Motor neuron (in vitro differentiated cells): ENCODE measurements at regions of chr3 and their contacts with region 1.

Region 1: GRCh38 chr3:107064445-107065060 is 312.7 kb upstream of the CCDC54 start:
- ATAC-seq: peak; percentile 65 to 90 (median 80)
- H3K4me3 ChIP-seq: no peak overlapping the region
- H3K27ac ChIP-seq: no peak overlapping the region
- H3K4me1 ChIP-seq: peaks cover 0 to 2% of the 10 kb centered on the region in 2 donors

Region 2: DNA sequence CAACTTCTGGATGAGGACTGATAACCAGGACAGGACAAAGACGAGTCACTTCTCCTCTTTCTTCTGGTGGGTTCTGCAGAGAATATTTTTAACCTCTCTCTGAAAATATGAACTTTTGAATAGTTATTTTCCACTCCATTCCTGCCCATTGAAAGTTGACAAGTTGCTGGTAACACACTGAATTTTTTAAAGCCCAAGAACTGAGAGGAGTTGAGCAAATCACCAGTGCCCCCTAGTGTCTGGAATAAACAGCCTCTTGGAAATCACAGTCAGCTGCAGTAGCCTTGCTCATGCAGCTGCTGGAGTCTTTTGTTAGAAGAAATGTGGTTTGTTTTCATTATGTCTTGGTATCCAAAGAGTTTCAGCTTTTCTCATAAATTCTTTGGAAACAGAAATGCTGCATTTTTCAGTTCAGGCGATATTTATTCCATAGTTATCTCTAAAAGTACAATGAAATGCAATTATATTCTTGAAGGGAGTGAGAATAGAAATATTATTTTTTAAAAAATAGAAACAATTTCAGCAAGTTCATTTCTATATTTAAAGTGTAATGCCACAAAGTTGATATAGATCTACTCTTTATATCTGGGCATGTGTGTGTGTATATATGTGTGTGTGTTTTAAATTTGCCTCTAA is 454.8 kb before region 1 on chr3:
- in situ Hi-C with region 1: loop called in 2 of 9 experiments (anchors 25 kb)
- ATAC-seq: peak; percentile 64 to 92 (median 81)
- H3K4me3 ChIP-seq: no peak overlapping the region
- H3K27ac ChIP-seq: no peak overlapping the region
- H3K4me1 ChIP-seq: peaks cover 0 to 2% of the 10 kb centered on the region in 2 donors

Region 3: GRCh38 chr3:106635271-106635670 is 429.3 kb before region 1 on chr3:
- in situ Hi-C with region 1: loop called in 1 of 9 experiments (anchors 25 kb)
- ATAC-seq: peak in 6 of 8 experiments; percentile 36 to 51 (median 44)
- H3K4me3 ChIP-seq: no peak overlapping the region
- H3K27ac ChIP-seq: no peak overlapping the region
- H3K4me1 ChIP-seq: peaks cover 0 to 2% of the 10 kb centered on the region in 2 donors

Region 4: GRCh38 chr3:106824856-106825255 is 239.7 kb before region 1 on chr3:
- in situ Hi-C with region 1: loop called in 3 of 9 experiments (anchors 25 kb)
- ATAC-seq: peak in 4 of 8 experiments; percentile 6 to 80 (median 68)
- H3K4me3 ChIP-seq: no peak overlapping the region
- H3K27ac ChIP-seq: no peak overlapping the region
- H3K4me1 ChIP-seq: peaks cover 7 to 15% of the 10 kb centered on the region in 2 donors

Region 5: DNA sequence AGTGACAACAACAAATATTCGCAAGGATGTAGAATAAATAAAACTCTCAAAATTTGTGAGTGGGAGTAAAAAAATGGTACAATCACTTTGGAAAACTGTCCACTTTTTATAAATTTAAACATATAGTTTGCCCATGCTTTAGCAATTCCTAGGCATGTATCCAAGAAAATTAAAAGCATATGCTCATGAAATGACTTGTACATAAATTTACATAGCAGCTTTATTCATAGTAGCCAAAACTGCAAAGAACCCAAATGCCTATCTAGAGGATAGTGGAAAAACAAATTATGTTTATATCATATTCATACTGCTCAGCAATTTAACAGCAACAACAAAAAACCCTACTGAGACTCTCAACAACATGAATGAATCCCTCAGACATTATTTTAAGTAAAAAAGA is 50.9 kb before region 1 on chr3:
- in situ Hi-C with region 1: no loop called
- ATAC-seq: peak in 3 of 8 experiments; percentile 66 to 97 (median 67)
- H3K4me3 ChIP-seq: no peak overlapping the region
- H3K27ac ChIP-seq: no peak overlapping the region
- H3K4me1 ChIP-seq: no peaks in the 10 kb centered on the region

Region 6: DNA sequence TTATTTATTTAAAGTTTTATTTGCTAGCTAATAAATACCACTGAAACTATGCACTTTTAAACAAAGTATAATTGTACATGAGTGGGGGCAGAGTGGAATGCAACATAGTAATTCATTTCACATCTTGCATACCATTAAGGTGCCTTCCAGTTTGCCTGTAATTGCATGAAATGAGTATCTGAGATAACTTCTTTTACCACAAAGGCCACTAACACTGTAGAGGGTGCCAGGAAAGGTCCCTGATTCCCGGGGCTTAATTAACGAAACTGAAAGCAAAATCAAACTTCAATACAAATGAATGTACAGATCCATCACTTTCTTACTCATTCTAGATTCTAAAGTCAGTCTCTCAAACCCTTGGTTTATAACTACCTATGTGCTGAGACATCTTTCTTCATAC is 1024.1 kb after region 1 on chr3:
- in situ Hi-C with region 1: no loop called
- ATAC-seq: no peak
- H3K4me3 ChIP-seq: peak overlapping the region in 4 of 5 donors; percentile 2 to 83 (median 46)
- H3K27ac ChIP-seq: no peak overlapping the region
- H3K4me1 ChIP-seq: peaks cover 0 to 12% of the 10 kb centered on the region in 2 donors